ENCODE measurements at regions of chr2 and their contacts with region 1.

Region 1: DNA sequence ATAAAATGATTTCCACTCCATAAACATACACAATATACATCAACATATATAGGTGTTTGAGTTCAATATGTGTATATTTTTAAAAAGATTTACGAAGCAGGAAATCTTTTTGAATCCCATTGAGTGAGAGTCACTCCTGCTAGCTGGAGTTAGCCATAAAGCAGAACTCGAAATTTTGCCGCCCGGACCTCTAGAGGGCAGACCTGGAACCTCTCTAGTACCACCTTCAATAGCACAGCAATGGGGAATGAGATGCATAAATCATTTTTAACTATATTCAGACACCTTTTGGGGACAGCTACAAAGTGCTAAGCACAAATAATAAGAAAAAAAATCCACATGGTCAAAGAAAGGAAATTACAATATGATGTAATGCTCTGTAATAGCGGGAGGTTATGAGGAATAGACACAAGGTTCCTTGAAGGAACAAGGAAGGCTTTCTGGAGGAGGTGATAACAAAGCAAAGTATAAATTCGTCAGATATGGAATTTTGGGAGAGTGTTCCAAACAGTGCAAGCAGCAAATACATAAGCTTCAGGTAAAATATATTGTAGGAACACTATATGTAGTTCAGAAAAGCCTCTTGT is 533.4 kb downstream of the ERBB4 start:
- DNase-seq: peak; percentile 67
- H3K4me3 ChIP-seq: no peak overlapping the region
- H3K27ac ChIP-seq: no peak overlapping the region
- H3K4me1 ChIP-seq: no peaks in the 10 kb centered on the region
- H3K27me3 ChIP-seq: no peaks in the 10 kb centered on the region
- CTCF ChIP-seq: peak; percentile 52 to 69
- POLR2A ChIP-seq: no peak

Region 2: DNA sequence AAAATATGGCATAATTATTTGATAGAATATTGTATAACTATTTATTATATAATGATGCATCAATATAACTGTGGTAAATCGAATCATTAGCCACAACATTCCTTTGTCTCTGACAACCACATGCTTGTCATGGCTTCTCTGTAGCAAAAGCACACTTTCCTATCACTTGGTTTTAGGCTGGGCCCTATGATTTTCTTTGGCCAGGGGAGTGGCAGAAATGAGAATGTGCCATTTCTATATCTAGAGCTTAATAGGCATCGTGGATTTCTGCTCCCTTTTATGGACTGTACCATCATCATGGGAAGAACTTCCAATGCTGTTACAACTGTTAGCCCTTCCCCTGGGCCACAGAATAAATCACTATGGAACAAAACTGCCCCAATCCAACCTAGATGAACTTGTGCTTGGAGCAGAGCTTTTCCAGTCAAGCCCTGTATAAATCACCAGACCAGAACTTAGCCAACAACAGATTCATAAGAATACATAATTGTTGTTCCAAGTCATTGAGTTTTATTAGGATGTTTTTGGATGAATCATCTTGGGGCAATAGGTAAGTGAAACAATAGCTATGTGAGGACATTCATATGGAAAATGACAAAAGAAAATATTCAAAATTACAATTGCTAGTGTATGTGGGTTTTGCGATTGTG is 182.4 kb before region 1 on chr2:
- CTCF ChIA-PET with region 1: no interaction called
- POLR2A ChIA-PET with region 1: no interaction called
- dilution Hi-C with region 1: no loop called
- intact Hi-C with region 1: no loop called
- DNase-seq: no peak
- H3K4me3 ChIP-seq: no peak overlapping the region
- H3K27ac ChIP-seq: no peak overlapping the region
- H3K4me1 ChIP-seq: no peaks in the 10 kb centered on the region
- H3K27me3 ChIP-seq: no peaks in the 10 kb centered on the region
- CTCF ChIP-seq: no peak
- POLR2A ChIP-seq: no peak

Region 3: DNA sequence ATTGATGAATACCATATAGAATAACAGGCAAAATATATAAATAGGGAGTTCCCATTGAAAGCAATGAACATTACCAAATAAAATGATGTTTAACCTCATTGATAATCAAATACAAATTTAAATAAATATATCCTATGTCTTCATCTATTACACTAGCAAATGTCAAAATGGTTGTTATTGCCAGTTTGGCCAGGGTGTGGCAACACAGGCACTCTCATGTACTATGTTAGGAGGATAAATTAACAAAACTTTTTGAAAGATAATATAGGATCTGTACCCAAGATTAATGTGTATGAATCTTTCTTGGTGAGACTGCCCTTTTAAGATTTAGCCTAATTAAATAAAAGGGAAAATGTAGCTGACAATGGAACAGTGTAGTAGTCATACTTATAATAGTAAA is 125.9 kb before region 1 on chr2:
- CTCF ChIA-PET with region 1: interaction called, 26 read pairs
- POLR2A ChIA-PET with region 1: no interaction called
- dilution Hi-C with region 1: no loop called
- intact Hi-C with region 1: loop called (anchors 5 kb)
- DNase-seq: peak; percentile 47
- H3K4me3 ChIP-seq: no peak overlapping the region
- H3K27ac ChIP-seq: no peak overlapping the region
- H3K4me1 ChIP-seq: peaks cover 7% of the 10 kb centered on the region
- H3K27me3 ChIP-seq: no peaks in the 10 kb centered on the region
- CTCF ChIP-seq: peak in 1 of 2 donors; percentile 28
- POLR2A ChIP-seq: no peak

Region 4: DNA sequence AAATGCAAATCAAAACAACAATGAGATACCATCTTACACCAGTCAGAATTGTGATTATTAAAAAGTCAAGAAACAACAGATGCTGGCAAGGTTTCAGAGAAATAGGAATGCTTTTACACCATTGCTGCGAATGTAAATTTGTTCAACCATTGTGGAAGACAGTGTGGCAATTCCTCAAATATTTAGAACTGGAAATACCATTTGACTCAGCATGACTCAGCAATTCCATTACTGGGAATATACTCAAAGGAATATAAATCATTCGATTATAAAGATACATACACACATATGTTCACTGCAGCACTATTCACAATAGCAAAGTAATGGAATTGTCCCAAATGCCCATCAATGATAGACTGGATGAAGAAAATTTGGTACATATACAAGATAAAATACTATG is 16.8 kb after region 1 on chr2:
- CTCF ChIA-PET with region 1: interaction called, 16 read pairs
- POLR2A ChIA-PET with region 1: no interaction called
- dilution Hi-C with region 1: no loop called
- intact Hi-C with region 1: loop called (anchors 2 kb)
- DNase-seq: peak; percentile 42
- H3K4me3 ChIP-seq: no peak overlapping the region
- H3K27ac ChIP-seq: peak overlapping the region; percentile 41
- H3K4me1 ChIP-seq: peaks cover 6% of the 10 kb centered on the region
- H3K27me3 ChIP-seq: no peaks in the 10 kb centered on the region
- CTCF ChIP-seq: no peak
- POLR2A ChIP-seq: no peak

Region 5: GRCh38 chr2:212052412-212053159 is 47.4 kb after region 1 on chr2:
- CTCF ChIA-PET with region 1: interaction called, 5 read pairs
- POLR2A ChIA-PET with region 1: no interaction called
- dilution Hi-C with region 1: no loop called
- intact Hi-C with region 1: loop called (anchors 1 kb)
- DNase-seq: peak; percentile 78
- H3K4me3 ChIP-seq: no peak overlapping the region
- H3K27ac ChIP-seq: peak overlapping the region; percentile 95
- H3K4me1 ChIP-seq: peaks cover 6% of the 10 kb centered on the region
- H3K27me3 ChIP-seq: no peaks in the 10 kb centered on the region
- CTCF ChIP-seq: no peak
- POLR2A ChIP-seq: no peak

Region 6: DNA sequence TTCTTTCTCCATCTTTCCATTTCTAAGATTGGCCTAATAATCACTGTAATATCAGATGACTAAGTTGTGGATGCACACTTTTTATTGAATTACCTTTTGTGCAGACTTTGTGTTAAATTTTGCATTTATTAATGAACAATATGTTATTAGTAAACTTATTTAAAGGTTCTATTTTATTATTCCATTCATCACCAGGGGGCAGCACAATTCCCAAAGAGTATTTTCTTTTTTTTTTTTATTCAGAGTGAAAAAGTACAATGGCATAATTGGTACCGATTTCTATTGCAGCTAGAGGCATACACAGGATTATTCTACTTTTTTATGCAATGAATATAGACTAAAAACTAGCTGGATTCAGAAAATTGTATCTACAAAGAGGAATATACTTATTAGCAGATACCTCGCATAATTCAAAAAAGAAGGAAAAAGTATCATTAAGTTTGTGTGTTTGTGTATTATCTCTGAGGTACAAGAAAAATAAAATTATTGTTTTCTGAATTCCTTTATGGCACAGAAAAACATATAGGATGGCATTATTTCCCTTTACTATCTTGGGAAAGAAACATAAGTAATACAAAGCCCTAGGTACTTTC is 142.8 kb after region 1 on chr2:
- CTCF ChIA-PET with region 1: interaction called, 10 read pairs
- POLR2A ChIA-PET with region 1: no interaction called
- dilution Hi-C with region 1: no loop called
- intact Hi-C with region 1: loop called (anchors 2 kb)
- DNase-seq: peak; percentile 39
- H3K4me3 ChIP-seq: no peak overlapping the region
- H3K27ac ChIP-seq: no peak overlapping the region
- H3K4me1 ChIP-seq: no peaks in the 10 kb centered on the region
- H3K27me3 ChIP-seq: no peaks in the 10 kb centered on the region
- CTCF ChIP-seq: peak; percentile 19 to 21
- POLR2A ChIP-seq: no peak

Region 7: GRCh38 chr2:212249451-212249850 is 244.3 kb after region 1 on chr2:
- CTCF ChIA-PET with region 1: interaction called, 65 read pairs
- POLR2A ChIA-PET with region 1: no interaction called
- dilution Hi-C with region 1: no loop called
- intact Hi-C with region 1: loop called (anchors 1 kb)
- DNase-seq: peak; percentile 46
- H3K4me3 ChIP-seq: no peak overlapping the region
- H3K27ac ChIP-seq: no peak overlapping the region
- H3K4me1 ChIP-seq: no peaks in the 10 kb centered on the region
- H3K27me3 ChIP-seq: no peaks in the 10 kb centered on the region
- CTCF ChIP-seq: peak; percentile 23 to 41
- POLR2A ChIP-seq: no peak